IMR-90 (cell line): ENCODE measurements at regions of chr2 and their contacts with region 1.

Region 1: DNA sequence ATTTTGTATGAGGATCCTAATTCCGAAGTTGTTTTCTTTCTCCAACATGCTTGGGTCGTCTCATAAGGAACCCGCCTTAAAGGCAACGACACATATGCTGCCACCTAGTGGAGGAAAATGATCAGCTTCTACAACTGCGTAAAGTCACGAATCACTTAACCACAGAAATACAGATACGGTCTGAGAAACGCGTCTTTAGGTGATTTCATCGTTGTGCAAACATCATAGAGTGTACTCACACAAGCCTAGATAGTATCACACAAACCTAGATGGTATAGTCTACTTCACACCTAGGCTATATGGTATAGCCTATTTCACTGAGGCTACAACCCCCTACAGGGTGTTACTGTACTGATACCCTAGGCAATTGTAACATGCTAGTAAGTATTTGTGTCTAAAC is 13.1 kb downstream of the GNLY start:
- DNase-seq: peak; percentile 94
- ATAC-seq: peak; percentile 82
- H3K4me3 ChIP-seq: no peak overlapping the region
- H3K27ac ChIP-seq: no peak overlapping the region
- H3K4me1 ChIP-seq: peaks cover 19% of the 10 kb centered on the region
- H3K27me3 ChIP-seq: no peaks in the 10 kb centered on the region; the same call in 1 of the 2 replicates
- CTCF ChIP-seq: peak; percentile 92
- POLR2A ChIP-seq: no peak
- RAD21 ChIP-seq: peak; percentile 82

Region 2: DNA sequence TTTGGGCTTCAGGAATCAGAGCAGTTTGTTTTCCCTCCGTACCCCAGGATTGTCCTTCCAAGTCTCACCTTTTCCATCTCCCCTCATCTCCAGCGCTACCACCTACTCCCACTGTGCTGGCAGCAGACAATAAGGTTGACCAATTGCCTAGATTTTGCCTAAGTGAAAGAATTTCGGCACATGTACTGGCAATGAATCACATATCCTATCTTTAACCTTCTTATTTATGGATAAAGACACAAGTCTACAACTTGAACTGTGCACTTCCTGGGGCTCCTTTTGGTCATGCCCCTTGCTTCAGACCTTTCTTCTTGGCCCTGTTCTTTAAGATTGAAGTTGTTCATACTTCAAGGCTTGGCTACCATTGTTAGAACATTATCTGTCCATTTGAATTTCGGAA is 665.0 kb before region 1 on chr2:
- CTCF ChIA-PET with region 1: no interaction called
- POLR2A ChIA-PET with region 1: interaction called, 11 read pairs
- dilution Hi-C with region 1: no loop called
- in situ Hi-C with region 1: no loop called
- intact Hi-C with region 1: no loop called
- DNase-seq: no peak
- ATAC-seq: peak; percentile 62
- H3K4me3 ChIP-seq: no peak overlapping the region
- H3K27ac ChIP-seq: no peak overlapping the region
- H3K4me1 ChIP-seq: peaks cover 4% of the 10 kb centered on the region
- H3K27me3 ChIP-seq: no peaks in the 10 kb centered on the region
- CTCF ChIP-seq: no peak
- POLR2A ChIP-seq: no peak
- RAD21 ChIP-seq: no peak

Region 3: DNA sequence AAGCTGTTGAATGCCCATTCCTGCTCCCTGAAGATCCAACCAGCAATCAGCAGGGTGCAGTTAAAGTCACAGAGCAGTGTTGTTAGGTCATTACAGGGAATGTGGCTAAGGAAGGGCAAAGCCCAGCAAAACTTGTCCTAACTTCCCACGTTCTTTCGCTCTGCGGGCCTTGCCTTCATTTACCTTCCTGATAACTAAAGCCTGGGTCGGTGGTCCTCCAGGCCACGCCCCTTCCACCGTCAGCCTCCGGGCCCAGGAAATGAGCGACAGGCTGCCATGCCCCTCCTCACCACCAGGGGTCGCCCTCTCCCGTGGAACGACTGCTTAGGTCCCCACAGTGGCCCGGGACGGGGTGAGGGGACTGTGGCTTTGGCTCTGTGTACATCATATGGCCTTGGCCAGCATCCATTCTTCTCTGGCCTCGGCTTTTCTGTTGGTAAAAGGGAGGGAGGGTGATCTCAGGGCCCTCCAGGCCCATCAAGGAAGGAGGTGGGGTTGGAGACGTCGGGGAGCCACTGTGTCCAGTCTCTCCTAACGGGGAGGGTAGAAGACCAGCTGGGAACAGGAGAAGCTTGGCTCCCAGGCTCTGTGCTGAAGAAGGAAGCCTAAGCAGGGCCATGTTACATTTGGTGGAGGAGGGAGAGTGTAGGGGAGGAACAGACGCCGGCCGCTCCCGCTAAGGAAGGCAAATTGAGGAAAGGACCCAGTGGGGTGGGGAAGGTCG is 286.6 kb before region 1 on chr2:
- CTCF ChIA-PET with region 1: no interaction called
- POLR2A ChIA-PET with region 1: no interaction called
- dilution Hi-C with region 1: no loop called
- in situ Hi-C with region 1: no loop called
- intact Hi-C with region 1: loop called (anchors 5 kb)
- DNase-seq: peak; percentile 77
- ATAC-seq: peak; percentile 77
- H3K4me3 ChIP-seq: no peak overlapping the region
- H3K27ac ChIP-seq: peak overlapping the region; percentile 85
- H3K4me1 ChIP-seq: peaks cover 23% of the 10 kb centered on the region
- H3K27me3 ChIP-seq: no peaks in the 10 kb centered on the region
- CTCF ChIP-seq: peak; percentile 97
- POLR2A ChIP-seq: no peak; the same call in 1 of the 2 replicates
- RAD21 ChIP-seq: peak; percentile 100

Region 4: DNA sequence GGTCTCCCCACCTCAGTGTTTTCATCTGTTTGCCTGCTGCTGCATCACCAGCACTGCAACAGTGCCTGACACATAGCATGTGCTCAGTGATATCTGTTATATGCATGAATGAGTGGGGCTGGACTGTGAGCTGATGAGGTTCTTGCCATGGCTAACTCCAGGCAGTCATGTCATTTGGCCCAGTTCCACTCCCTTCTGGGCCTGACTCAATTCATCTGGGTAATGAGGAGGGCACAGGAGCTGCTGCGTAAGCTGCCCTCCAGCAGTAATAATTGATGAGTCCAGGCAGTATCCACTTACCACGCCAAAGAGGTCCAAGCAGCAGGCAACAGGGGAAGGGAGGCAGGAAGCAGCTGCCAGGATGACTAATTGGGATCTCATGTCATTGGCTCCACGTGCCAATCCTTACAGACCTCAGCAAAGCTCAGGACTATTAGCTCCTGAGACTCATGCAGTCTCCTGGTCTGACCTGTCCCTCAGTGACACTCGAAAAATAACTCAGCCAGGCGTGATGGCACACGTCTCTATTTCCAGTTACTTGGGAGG is 202.5 kb before region 1 on chr2:
- CTCF ChIA-PET with region 1: no interaction called
- POLR2A ChIA-PET with region 1: no interaction called
- dilution Hi-C with region 1: no loop called
- in situ Hi-C with region 1: no loop called
- intact Hi-C with region 1: no loop called
- DNase-seq: peak; percentile 97
- ATAC-seq: peak; percentile 70
- H3K4me3 ChIP-seq: no peak overlapping the region
- H3K27ac ChIP-seq: peak overlapping the region; percentile 72
- H3K4me1 ChIP-seq: peaks cover 32% of the 10 kb centered on the region
- H3K27me3 ChIP-seq: no peaks in the 10 kb centered on the region
- CTCF ChIP-seq: no peak
- POLR2A ChIP-seq: no peak
- RAD21 ChIP-seq: no peak; the same call in 1 of the 2 replicates

Region 5: DNA sequence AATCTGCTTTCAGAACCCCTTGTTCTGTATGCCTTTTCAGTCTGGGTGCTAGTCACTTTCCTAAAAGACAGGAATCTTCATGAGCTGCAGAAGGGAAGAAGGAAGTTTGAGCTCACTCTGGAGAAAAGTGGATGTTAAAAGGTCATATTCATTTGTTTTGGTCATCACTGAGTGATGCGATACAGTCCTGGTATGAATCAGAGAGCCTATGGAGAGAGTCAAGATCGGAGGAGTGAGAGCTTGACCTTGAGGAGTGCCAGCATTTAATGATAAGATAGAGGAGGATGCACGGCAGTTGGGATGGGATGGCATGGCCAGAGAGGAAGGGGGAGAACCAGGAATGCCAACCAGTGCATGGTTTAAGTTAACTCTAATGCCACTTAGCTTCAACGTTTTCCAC is 71.7 kb before region 1 on chr2:
- CTCF ChIA-PET with region 1: interaction called, 18 read pairs
- POLR2A ChIA-PET with region 1: no interaction called
- dilution Hi-C with region 1: no loop called
- in situ Hi-C with region 1: no loop called
- intact Hi-C with region 1: loop called (anchors 1 kb)
- DNase-seq: peak; percentile 50
- ATAC-seq: peak; percentile 68
- H3K4me3 ChIP-seq: no peak overlapping the region
- H3K27ac ChIP-seq: no peak overlapping the region
- H3K4me1 ChIP-seq: 0 out of 2 replicates have a peak, but pooled peaks cover 4% of the 10 kb centered on the region
- H3K27me3 ChIP-seq: no peaks in the 10 kb centered on the region
- CTCF ChIP-seq: no peak
- POLR2A ChIP-seq: no peak
- RAD21 ChIP-seq: no peak

Region 6: DNA sequence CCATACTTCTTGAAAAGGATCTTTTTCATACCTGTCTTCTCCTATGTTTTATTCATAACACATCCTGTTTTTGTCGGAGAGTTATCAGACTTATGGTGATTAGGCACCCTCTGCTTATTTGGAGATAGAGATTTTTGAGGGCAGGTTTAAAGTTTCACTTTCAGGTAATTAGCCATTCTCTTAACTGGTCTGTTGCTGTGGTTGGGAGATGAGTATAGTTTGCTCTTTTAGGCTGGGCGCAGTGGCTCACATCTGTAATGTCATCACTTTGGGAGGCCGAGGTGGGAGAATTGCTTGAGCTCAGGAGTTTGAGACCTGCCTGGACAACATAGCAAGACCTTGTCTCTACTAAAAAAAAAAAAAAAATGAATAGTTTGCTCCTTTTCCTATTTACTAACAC is 64.6 kb before region 1 on chr2:
- CTCF ChIA-PET with region 1: interaction called, 18 read pairs
- POLR2A ChIA-PET with region 1: no interaction called
- dilution Hi-C with region 1: no loop called
- in situ Hi-C with region 1: loop called (anchors 5 kb)
- intact Hi-C with region 1: loop called (anchors 1 kb)
- DNase-seq: no peak
- ATAC-seq: no peak
- H3K4me3 ChIP-seq: no peak overlapping the region
- H3K27ac ChIP-seq: no peak overlapping the region
- H3K4me1 ChIP-seq: no peaks in the 10 kb centered on the region
- H3K27me3 ChIP-seq: no peaks in the 10 kb centered on the region
- CTCF ChIP-seq: no peak
- POLR2A ChIP-seq: no peak
- RAD21 ChIP-seq: no peak

Region 7: DNA sequence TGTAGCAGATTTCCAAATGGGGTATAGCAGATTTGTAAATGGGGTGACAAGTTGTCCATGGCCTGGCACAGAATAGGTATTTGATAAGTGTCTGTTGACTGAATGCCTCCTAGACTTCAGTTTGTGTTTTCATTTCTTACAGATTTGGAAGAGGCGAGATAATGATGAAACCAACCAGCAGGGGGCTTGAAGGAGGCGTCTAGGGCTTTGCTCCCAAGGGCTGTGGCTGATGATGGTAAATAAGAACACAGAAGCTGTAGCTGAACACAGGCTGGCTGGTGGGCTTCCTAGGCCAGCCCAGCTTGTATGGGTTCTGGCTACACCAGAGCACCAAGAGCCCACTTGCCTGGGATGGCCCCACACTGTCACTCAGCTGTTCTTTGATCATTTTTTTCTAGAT is 58.7 kb before region 1 on chr2:
- CTCF ChIA-PET with region 1: interaction called, 7 read pairs
- POLR2A ChIA-PET with region 1: no interaction called
- dilution Hi-C with region 1: no loop called
- in situ Hi-C with region 1: loop called (anchors 5 kb)
- intact Hi-C with region 1: loop called (anchors 1 kb)
- DNase-seq: peak; percentile 70
- ATAC-seq: peak; percentile 55
- H3K4me3 ChIP-seq: no peak overlapping the region
- H3K27ac ChIP-seq: peak overlapping the region; percentile 99
- H3K4me1 ChIP-seq: peaks cover 27% of the 10 kb centered on the region
- H3K27me3 ChIP-seq: no peaks in the 10 kb centered on the region
- CTCF ChIP-seq: peak; percentile 65
- POLR2A ChIP-seq: no peak
- RAD21 ChIP-seq: peak; percentile 67

Region 8: DNA sequence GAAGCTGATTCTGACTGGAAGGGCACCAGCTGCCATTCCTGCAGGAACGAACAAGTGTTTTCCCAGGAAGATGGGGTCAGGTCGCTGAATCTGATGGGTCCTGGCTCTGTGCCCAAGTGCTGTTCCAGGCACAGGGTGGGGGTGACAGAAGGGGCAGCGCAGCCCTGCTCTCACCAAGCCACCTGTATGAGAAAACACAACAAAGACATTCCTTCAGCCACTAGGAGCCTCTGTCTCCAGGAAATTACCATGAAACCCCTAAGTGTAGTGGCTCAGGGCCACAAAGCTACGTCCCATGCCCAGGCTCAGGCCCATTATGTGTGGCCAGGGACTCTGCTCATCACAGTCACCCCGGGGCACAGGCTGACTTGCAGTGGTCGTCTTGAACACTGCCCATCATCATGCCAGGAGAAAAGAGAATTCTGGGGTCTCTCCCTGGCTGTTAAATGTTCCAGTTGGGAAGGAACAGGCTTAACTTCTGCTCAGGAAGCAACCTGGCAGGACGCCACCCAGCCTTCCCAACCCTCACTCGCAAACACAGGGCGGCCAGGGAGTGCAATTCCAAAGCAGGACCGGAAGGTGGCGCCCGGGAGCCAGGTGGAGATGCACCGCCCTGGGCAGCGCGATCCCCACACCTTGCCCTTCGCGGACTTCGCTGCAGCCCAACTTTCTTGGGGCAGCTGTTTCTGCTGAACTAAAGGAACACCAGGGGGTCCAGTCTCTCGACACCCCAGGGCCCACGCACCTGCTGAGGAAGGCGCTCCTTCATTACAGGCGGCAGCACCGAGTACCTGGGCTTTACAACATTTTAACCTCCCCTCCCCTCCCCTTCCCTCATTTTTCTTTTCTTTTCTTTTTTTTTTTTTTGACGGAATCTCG is 28.3 kb before region 1 on chr2:
- CTCF ChIA-PET with region 1: interaction called, 5 read pairs
- POLR2A ChIA-PET with region 1: no interaction called
- dilution Hi-C with region 1: no loop called
- in situ Hi-C with region 1: no loop called
- intact Hi-C with region 1: loop called (anchors 1 kb)
- DNase-seq: peak; percentile 72
- ATAC-seq: peak; percentile 98
- H3K4me3 ChIP-seq: no peak overlapping the region
- H3K27ac ChIP-seq: no peak overlapping the region
- H3K4me1 ChIP-seq: 0 out of 2 replicates have a peak, but pooled peaks cover 1% of the 10 kb centered on the region
- H3K27me3 ChIP-seq: no peaks in the 10 kb centered on the region; the same call in 1 of the 2 replicates
- CTCF ChIP-seq: peak; percentile 91
- POLR2A ChIP-seq: no peak
- RAD21 ChIP-seq: peak; percentile 86